ENCODE measurements at regions of chr13 and their contacts with region 1.

Region 1: GRCh38 chr13:37368501-37368900 is 230.1 kb downstream of the POSTN start:
- DNase-seq: no peak
- H3K4me3 ChIP-seq: no peak overlapping the region
- H3K27ac ChIP-seq: no peak overlapping the region
- H3K4me1 ChIP-seq: no peaks in the 10 kb centered on the region
- H3K27me3 ChIP-seq: no peaks in the 10 kb centered on the region
- CTCF ChIP-seq: no peak

Region 2: GRCh38 chr13:37175996-37176395 is 192.5 kb before region 1 on chr13:
- intact Hi-C with region 1: no loop called
- DNase-seq: no peak
- H3K4me3 ChIP-seq: no peak overlapping the region
- H3K27ac ChIP-seq: no peak overlapping the region
- H3K4me1 ChIP-seq: no peaks in the 10 kb centered on the region
- H3K27me3 ChIP-seq: no peaks in the 10 kb centered on the region
- CTCF ChIP-seq: no peak

Region 3: DNA sequence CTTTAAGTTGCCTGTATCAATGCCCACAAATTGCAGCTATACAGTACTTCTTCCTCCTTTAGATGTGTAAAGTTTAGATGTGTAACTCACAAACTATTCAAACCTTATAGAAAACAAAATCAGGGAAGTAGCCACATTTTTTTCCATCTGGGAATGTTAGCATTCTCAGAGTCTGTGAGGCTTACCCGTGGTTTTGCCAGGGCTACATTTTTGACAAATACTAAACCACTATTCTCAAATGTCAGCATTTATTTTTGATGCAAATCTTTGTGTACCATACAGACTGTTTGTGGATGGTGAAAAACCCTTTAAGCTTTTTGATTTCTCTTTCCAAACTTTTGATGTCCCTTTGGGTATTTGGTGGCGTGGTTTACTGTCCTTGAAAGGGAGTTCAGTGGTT is 13.6 kb after region 1 on chr13:
- intact Hi-C with region 1: loop called (anchors 1 kb)
- DNase-seq: no peak
- H3K4me3 ChIP-seq: no peak overlapping the region
- H3K27ac ChIP-seq: peak overlapping the region in 1 of 2 donors; percentile 21
- H3K4me1 ChIP-seq: peaks cover 0 to 7% of the 10 kb centered on the region in 2 donors
- H3K27me3 ChIP-seq: no peaks in the 10 kb centered on the region
- CTCF ChIP-seq: no peak

Measured in ascending aorta (tissue), 2 donors.